IMR-90 (cell line): ENCODE measurements at regions of chr19 and their contacts with region 1.

Region 1: GRCh38 chr19:47790398-47790814 is 11.9 kb downstream of the SELENOW start:
- DNase-seq: peak; percentile 59
- ATAC-seq: peak; percentile 88
- H3K4me3 ChIP-seq: no peak overlapping the region
- H3K27ac ChIP-seq: no peak overlapping the region
- H3K4me1 ChIP-seq: no peaks in the 10 kb centered on the region
- H3K27me3 ChIP-seq: no peaks in the 10 kb centered on the region
- CTCF ChIP-seq: peak; percentile 72
- POLR2A ChIP-seq: no peak
- RAD21 ChIP-seq: no peak

Region 2: DNA sequence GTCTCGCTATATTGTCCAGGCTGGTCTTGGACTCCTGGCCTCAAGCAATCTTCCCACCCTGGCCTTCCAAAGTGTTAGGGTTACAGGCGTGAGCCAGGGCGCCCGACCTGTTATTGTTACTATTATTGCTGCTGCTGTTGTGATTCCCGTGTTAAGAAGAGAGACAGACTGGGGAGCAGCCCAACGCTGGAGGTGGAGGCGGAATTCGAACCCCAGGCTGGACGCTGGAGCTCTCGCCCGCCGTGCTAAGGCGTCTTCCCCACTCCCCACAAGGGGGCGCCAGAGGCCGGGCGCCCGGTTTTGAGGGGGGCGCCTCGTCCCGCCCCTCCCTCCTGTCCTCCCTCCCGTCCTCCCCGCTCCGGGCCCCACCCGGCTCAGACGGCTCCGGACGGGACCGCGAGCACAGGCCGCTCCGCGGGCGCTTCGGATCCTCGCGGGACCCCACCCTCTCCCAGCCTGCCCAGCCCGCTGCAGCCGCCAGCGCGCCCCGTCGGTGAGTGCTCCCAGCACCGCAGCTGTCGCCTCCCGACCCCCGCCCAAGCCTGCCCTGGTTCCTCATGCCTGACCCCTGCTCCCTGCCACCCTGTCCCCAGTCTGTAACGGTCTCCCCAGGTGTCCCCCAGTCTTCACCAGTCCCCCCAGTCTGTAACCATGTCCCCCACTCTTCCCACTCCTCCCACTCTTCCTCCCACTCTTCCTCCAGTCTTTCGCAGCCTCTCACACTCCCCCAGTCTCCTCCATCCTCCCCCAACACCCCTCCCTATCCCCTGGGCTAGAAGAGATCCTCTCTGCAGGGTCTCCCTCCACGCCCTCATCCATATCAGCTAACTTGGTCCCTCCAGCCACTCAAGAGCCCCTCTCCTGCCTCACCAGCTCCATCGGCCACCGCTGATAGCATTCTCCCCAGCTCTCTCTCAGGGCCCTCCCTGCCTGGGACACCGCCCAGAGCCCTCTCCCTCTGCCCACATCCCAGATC is 77.1 kb before region 1 on chr19 and contains the start of gene EHD2:
- CTCF ChIA-PET with region 1: interaction called, 3 read pairs
- POLR2A ChIA-PET with region 1: no interaction called
- dilution Hi-C with region 1: no loop called
- in situ Hi-C with region 1: no loop called
- intact Hi-C with region 1: loop called (anchors 1 kb)
- DNase-seq: peak; percentile 76
- ATAC-seq: peak; percentile 92
- H3K4me3 ChIP-seq: peak within 1 kb of the TSS; percentile 90
- H3K27ac ChIP-seq: peak within 1 kb of the TSS; percentile 98
- H3K4me1 ChIP-seq: peaks cover 15% of the 10 kb centered on the region
- H3K27me3 ChIP-seq: no peaks in the 10 kb centered on the region
- CTCF ChIP-seq: peak; percentile 97
- POLR2A ChIP-seq: peak; percentile 93
- RAD21 ChIP-seq: peak; percentile 95
- total RNA-seq, gene EHD2: 31.9 and 35.3 TPM in 2 replicates

Region 3: DNA sequence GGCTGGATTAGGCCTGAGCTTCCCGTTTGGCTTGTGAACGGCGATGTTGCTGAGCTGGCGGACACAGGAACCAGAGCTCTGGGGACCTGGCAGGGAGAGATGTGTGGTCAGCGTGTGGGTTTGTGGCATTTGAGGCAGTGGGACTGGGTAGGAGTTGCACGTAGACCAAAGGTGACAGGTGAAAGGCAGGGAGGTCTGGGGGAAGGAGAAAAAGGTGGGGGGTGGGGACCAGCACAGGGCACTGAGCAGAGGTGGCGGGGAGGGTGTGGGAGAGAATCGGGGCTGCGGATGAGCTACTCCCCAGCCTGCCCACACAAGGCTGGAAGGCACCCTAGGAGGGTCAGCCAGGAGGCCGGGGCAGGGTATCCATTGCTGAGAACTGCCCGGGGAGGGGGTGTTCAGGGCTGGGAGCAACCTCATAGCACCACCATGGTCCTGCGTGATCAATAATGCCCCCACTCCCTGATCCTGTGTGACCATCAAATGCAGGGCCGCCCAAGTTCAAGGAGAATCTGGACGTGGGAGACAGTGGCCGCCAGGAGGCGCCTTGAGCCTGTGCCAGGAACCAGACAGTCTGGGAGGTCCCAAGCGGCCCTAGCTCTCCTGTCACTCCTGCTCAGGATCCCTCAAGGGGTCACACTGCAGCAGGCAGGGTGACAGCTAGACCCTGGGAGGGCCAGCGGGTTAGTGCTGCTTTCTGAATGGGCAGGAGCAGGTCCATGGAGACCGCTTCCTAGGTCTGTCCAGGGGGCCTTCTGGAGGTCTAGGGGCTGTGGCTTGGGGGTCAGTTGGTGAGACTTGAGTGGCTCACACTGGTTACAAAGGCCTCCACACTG is 24.7 kb before region 1 on chr19:
- CTCF ChIA-PET with region 1: interaction called, 4 read pairs
- POLR2A ChIA-PET with region 1: no interaction called
- dilution Hi-C with region 1: no loop called
- in situ Hi-C with region 1: no loop called
- intact Hi-C with region 1: loop called (anchors 1 kb)
- DNase-seq: peak; percentile 44
- ATAC-seq: peak; percentile 85
- H3K4me3 ChIP-seq: no peak overlapping the region
- H3K27ac ChIP-seq: no peak overlapping the region
- H3K4me1 ChIP-seq: no peaks in the 10 kb centered on the region
- H3K27me3 ChIP-seq: peaks cover 7% of the 10 kb centered on the region; the same call in 1 of the 2 replicates
- CTCF ChIP-seq: peak; percentile 67
- POLR2A ChIP-seq: no peak
- RAD21 ChIP-seq: peak; percentile 64

Region 4: GRCh38 chr19:48152551-48152950 is 362.1 kb after region 1 on chr19:
- CTCF ChIA-PET with region 1: no interaction called
- POLR2A ChIA-PET with region 1: no interaction called
- dilution Hi-C with region 1: no loop called
- in situ Hi-C with region 1: no loop called
- intact Hi-C with region 1: no loop called
- DNase-seq: peak; percentile 75
- ATAC-seq: peak; percentile 95
- H3K4me3 ChIP-seq: no peak overlapping the region
- H3K27ac ChIP-seq: no peak overlapping the region
- H3K4me1 ChIP-seq: no peaks in the 10 kb centered on the region
- H3K27me3 ChIP-seq: no peaks in the 10 kb centered on the region
- CTCF ChIP-seq: peak; percentile 82
- POLR2A ChIP-seq: no peak
- RAD21 ChIP-seq: peak; percentile 79